ENCODE measurements at regions of chr13 and their contacts with region 1.

Region 1: GRCh38 chr13:76473552-76474134 is 412.6 kb downstream of the KCTD12 start:
- DNase-seq: peak; percentile 74 to 93
- H3K4me3 ChIP-seq: no peak overlapping the region
- H3K27ac ChIP-seq: no peak overlapping the region
- H3K4me1 ChIP-seq: peaks cover 0 to 5% (median 0%) of the 10 kb centered on the region in 4 donors
- H3K27me3 ChIP-seq: no peaks in the 10 kb centered on the region
- CTCF ChIP-seq: peak in 6 of 7 experiments; percentile 49 to 93 (median 84)
- EP300 ChIP-seq: no peak
- POLR2A ChIP-seq: no peak

Region 2: GRCh38 chr13:75687150-75687763 is 786.4 kb before region 1 on chr13:
- intact Hi-C with region 1: loop called (anchors 10 kb)
- DNase-seq: peak in 1 of 2 donors; percentile 55
- H3K4me3 ChIP-seq: no peak overlapping the region
- H3K27ac ChIP-seq: no peak overlapping the region
- H3K4me1 ChIP-seq: peaks cover 0 to 3% (median 0%) of the 10 kb centered on the region in 4 donors
- H3K27me3 ChIP-seq: no peaks in the 10 kb centered on the region
- CTCF ChIP-seq: peak in 5 of 7 experiments; percentile 19 to 43 (median 33)
- EP300 ChIP-seq: no peak
- POLR2A ChIP-seq: no peak

Region 3: GRCh38 chr13:75876360-75877050 is 597.1 kb before region 1 on chr13:
- intact Hi-C with region 1: loop called (anchors 10 kb)
- DNase-seq: peak; percentile 61 to 86
- H3K4me3 ChIP-seq: no peak overlapping the region
- H3K27ac ChIP-seq: no peak overlapping the region
- H3K4me1 ChIP-seq: peaks cover 0 to 20% (median 8%) of the 10 kb centered on the region in 4 donors
- H3K27me3 ChIP-seq: no peaks in the 10 kb centered on the region
- CTCF ChIP-seq: peak in 5 of 7 experiments; percentile 85 to 90 (median 88)
- EP300 ChIP-seq: no peak
- POLR2A ChIP-seq: no peak

Region 4: DNA sequence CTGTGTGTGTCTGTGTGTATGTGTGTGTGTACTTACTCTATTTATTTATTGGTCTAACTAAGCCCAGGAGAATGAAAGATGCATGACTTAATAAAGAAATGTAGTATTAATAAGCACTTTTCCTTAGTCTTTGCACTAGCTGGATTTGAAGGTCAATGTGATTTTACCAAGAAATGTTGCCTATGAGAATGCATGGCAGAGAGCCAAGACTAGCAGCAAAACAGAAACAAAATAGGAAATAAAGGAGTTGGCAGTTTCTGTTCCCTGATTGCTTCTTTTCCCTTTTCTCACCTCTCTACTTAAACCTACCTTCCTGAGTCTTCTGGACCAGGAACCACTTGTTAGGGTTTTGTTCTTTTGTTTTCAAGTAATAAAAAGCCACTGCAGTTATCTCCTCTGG is 126.4 kb after region 1 on chr13:
- intact Hi-C with region 1: no loop called
- DNase-seq: peak in 1 of 2 donors; percentile 34
- H3K4me3 ChIP-seq: no peak overlapping the region
- H3K27ac ChIP-seq: no peak overlapping the region
- H3K4me1 ChIP-seq: no peaks in the 10 kb centered on the region
- H3K27me3 ChIP-seq: no peaks in the 10 kb centered on the region
- CTCF ChIP-seq: no peak
- EP300 ChIP-seq: no peak
- POLR2A ChIP-seq: no peak

Region 5: DNA sequence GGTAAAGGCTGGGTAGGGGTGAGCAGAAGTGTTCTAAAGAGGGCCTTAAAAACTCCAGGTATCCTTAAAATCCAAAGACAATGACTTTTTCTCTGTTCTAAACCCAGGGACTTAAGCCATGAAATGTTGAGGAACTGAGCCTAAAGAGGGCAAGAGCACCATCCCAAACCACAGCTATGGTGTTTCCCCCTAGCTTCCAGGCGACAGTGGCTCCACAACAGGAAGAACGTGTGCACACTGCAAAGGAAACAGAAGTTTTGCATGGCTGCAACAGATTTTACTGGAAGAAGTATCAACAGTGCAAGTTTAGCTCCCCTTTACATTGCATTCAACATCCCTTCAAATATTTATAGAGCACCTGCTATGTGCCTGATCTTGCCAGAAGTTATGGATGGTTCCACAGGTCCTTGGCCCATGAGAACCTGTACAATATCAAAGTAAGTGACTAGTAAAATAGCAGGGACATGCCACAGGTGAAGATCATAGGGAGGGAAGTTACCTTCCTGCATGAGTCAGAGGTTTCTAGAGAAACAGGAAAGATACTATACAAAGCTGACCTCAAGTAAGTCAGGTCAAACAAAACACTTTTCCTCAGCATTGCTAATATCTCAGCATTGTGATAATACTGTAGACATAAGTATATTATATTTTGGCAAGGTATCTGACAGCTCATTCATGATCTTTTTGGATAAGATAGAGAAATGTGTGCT is 420.9 kb after region 1 on chr13:
- intact Hi-C with region 1: loop called (anchors 10 kb)
- DNase-seq: no peak
- H3K4me3 ChIP-seq: no peak overlapping the region
- H3K27ac ChIP-seq: no peak overlapping the region
- H3K4me1 ChIP-seq: no peaks in the 10 kb centered on the region
- H3K27me3 ChIP-seq: no peaks in the 10 kb centered on the region
- CTCF ChIP-seq: no peak
- EP300 ChIP-seq: no peak
- POLR2A ChIP-seq: no peak